GM10248 (cell line): ENCODE measurements at regions of chr12 and their contacts with region 1.

Region 1: GRCh38 chr12:11059784-11060183 is 2.3 kb downstream of the TAS2R46 start:
- DNase-seq: no peak
- CTCF ChIP-seq: no peak

Region 2: DNA sequence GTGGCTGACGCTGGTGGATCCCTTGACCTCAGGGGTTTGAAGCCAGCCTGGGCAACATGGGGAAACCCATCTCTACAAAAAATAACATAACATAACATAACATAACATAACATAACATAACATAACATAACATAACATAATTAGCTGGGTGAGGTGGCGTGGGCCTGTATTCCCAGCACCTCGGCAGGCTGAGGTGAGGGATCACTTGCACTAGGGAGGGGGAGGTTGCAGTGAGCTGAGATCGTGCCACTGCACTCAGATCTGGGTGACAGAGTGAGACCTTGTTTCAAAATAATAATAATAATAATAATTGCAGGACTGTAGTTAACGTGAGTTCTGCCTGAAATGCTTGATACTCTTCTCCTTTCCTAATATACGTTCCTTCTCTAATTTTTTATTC is 447.7 kb before region 1 on chr12:
- CTCF ChIA-PET with region 1: no interaction called
- POLR2A ChIA-PET with region 1: interaction called, 11 read pairs
- DNase-seq: no peak
- CTCF ChIP-seq: no peak

Region 3: GRCh38 chr12:10994307-10994706 is 65.5 kb before region 1 on chr12:
- CTCF ChIA-PET with region 1: no interaction called
- POLR2A ChIA-PET with region 1: no interaction called
- DNase-seq: no peak
- CTCF ChIP-seq: no peak

Region 4: DNA sequence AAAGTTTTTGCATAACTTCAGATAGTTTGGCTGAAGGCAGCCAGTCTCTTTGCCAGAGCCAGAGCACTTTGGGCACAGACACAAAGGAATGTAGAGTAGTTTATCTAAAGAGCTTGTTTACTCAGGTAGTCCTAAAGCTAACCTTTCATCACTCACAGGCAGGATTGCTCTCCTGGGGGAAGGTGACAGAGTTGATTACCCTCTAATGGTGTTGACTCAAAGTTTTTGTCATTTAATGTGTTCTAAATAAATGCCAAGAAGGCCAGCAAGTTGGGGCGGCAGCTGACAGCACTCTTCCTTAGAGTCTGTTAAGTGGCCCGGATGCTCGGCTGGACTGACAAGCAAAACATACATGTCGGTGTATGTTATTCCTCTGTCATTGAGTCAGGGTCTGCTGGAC is 11.6 kb after region 1 on chr12:
- CTCF ChIA-PET with region 1: no interaction called
- POLR2A ChIA-PET with region 1: no interaction called
- DNase-seq: no peak
- CTCF ChIP-seq: no peak